ENCODE measurements at regions of chrX and their contacts with region 1.

Region 1: DNA sequence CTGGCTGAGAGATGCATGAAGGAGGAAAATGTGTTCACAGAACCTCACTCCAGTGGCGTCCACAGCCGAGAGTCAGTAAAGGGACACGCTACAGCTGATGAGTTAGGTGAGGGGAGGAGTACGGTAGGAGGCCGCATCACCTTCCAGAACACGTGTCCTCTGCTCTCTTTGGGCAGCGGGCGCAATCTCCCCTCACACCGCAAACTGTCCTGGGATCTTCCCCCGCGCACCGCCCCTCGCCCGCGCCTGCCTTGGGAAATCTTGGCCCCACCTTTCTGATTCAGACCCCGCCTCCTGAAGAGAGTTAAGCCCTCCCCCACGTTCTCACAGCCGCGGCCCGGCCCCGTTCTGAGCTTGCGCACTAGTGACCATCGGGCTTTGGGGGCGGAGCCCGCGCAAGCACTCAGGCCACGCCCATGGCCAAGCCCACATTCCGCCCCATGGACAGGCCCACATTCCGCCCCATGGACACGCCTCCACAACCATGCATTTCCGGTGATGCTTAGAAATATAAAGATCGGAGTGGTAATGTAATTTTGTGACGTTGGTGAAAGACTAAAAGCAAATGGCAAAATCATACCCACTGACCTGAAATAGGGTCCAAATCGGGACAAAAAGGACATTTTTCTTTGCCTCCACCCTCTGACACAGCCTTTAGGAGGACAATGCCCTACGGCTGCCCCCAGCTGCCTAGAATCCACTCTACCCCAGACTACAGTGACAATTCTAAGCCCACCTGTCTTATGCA is 13.3 kb downstream of the SMIM10 start:
- DNase-seq: peak; percentile 61 to 95
- H3K4me3 ChIP-seq: peak overlapping the region; percentile 23 to 51
- H3K27ac ChIP-seq: peak overlapping the region; percentile 22 to 44
- H3K4me1 ChIP-seq: peaks cover 0 to 9% of the 10 kb centered on the region in 2 donors
- H3K27me3 ChIP-seq: no peaks in the 10 kb centered on the region
- CTCF ChIP-seq: no peak

Region 2: DNA sequence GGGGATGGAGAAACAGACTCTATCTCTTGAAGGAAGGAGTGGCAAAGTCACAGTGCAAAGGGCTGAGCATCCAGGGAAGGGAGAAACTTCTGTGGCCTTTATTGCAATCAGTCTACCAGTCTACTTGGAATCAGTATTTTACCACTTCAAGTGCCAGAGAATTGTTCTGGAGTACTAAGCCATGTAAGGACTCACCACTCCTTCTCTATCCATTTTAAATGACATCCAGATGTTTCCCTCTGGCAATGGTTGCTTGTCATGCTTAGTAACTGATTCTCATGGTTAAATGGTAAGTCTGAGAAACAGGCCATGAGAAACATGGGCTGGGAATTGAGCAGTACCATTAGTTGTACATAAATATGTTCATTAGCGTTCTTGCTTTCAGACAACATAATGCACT is 34.3 kb before region 1 on chrX:
- intact Hi-C with region 1: loop called (anchors 1 kb)
- DNase-seq: peak in 1 of 2 donors; percentile 4
- H3K4me3 ChIP-seq: no peak overlapping the region
- H3K27ac ChIP-seq: no peak overlapping the region
- H3K4me1 ChIP-seq: no peaks in the 10 kb centered on the region
- H3K27me3 ChIP-seq: no peaks in the 10 kb centered on the region
- CTCF ChIP-seq: no peak

Region 3: DNA sequence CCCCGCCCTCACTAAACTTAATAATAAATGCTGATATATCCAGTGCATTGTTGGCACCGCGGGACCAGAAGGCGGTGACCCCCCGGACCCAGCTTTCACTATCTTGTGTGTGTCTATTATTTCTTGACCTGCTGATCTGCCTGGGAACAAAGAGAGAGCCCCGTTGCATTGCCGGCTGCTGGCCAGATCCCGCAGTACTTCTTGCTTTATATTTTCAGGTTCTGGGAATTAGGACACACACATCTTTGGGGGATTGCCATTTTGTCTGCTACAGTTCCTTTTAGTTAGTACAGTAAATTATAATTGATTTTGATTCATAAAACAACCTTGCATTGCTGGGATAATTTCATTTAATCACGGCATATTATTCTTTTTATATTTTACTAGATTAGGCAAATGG is 20.5 kb after region 1 on chrX:
- intact Hi-C with region 1: loop called (anchors 1 kb)
- DNase-seq: no peak
- H3K4me3 ChIP-seq: no peak overlapping the region
- H3K27ac ChIP-seq: no peak overlapping the region
- H3K4me1 ChIP-seq: no peaks in the 10 kb centered on the region
- H3K27me3 ChIP-seq: no peaks in the 10 kb centered on the region
- CTCF ChIP-seq: no peak

Region 4: GRCh38 chrX:135050603-135051002 is 46.6 kb after region 1 on chrX:
- intact Hi-C with region 1: loop called (anchors 5 kb)
- DNase-seq: no peak
- H3K4me3 ChIP-seq: peak overlapping the region; percentile 56 to 72
- H3K27ac ChIP-seq: no peak overlapping the region
- H3K4me1 ChIP-seq: no peaks in the 10 kb centered on the region
- H3K27me3 ChIP-seq: no peaks in the 10 kb centered on the region
- CTCF ChIP-seq: no peak

Measured in ascending aorta (tissue), 2 donors.